Right ventricle myocardium inferior (tissue), 1 donor: ENCODE measurements at regions of chr4 and their contacts with region 1.

Region 1: DNA sequence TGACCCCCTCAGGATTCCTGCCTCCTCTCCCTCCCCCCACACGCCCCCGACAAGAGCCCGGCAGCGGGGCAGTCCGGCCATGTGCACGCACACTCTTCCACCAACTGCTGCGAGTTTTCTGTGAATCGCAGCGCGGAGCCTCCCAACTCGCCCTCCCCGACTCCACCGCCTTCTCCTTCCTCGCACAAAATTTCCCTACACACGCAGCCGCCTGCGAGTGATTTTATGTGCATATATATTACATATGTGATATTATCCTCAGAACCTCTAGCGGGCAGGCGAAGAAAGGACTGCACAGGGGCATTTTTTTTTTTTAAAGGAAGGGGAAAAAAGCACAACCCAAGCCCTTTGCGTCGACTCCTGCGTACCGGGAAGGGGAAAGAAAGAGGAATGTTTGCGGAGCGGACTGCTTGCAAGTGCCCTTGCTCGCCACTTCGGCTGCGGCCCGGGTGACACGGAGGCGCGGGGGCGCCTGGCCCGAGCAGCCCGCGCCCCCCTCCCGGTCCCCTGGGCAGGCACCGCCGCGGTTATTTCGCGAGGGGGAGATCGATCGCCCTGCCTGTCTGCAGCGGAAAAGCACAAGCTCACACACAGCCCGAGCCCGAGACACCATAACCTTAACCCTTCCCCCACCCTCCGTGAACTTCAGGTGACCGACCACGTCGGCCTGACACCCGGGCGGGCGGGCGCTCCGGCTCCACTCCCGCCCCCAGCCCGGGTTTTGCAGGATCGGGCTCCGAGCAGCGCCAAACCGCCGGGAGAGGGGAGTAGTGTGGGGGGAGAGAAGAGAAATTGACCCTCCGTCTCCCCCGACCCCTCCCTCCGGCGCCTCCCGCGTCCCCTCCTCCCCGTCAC is 2.3 kb downstream of the ZNF827 start:
- DNase-seq: peak; percentile 76
- ATAC-seq: peak; percentile 63

Region 2: GRCh38 chr4:145333807-145334206 is 602.6 kb before region 1 on chr4:
- intact Hi-C with region 1: no loop called
- DNase-seq: no peak
- ATAC-seq: no peak

Region 3: GRCh38 chr4:145694929-145695328 is 241.4 kb before region 1 on chr4:
- intact Hi-C with region 1: no loop called
- DNase-seq: no peak
- ATAC-seq: no peak

Region 4: DNA sequence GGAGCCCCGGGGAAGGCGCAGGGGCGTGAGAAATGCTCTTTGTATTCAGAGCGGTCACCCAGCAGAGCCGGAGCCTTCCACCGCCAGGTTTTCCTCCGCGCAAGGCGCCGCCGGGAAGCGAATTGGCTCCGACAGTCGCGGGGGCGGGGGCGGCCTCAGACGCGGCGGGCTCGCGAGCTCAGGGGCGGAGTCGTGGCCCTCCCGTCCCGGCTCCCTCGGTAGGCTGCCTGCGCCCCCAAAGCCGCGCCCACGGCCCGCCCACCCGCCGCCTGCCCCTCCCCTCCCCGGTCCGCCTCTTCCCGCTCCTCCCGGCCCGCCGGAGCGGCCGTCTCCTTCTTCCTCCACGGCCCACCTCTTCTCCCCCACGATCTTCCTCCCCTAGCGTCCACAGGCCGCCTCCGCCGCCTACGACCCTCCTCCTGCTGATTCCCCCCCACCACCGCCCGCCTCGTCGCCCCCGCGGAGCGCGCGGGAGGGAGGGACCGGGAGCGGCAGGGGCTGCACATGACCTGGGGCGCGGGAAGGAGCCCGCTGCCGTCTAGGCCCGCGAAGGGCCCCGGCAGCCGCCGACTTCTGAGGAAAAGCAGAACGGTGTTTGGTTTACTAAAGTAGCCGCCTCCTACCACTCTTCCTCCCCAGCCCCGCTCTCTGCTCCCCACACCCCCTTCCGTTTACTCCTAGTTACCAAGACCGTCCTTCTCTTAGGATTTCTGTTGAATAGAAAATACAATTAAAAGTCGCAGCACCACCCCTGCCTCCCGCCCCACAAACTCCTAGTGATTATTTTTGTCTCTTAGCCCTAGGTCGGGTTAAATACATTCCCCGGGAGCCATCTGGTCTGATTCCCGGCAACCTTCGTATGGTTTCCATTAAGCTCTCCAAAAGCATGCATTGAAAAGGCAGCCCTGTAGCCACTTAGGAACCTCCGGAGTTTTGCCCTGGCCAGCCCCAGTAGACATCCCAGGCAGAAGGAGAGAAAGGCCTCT is 203.2 kb before region 1 on chr4:
- intact Hi-C with region 1: loop called (anchors 1 kb)
- DNase-seq: peak; percentile 95
- ATAC-seq: peak; percentile 98

Region 5: GRCh38 chr4:145743641-145744040 is 192.7 kb before region 1 on chr4:
- intact Hi-C with region 1: no loop called
- DNase-seq: no peak
- ATAC-seq: no peak

Region 6: GRCh38 chr4:145887241-145887991 is 49.0 kb before region 1 on chr4:
- intact Hi-C with region 1: loop called (anchors 2 kb)
- DNase-seq: no peak
- ATAC-seq: peak; percentile 70

Region 7: GRCh38 chr4:145909281-145909715 is 27.1 kb before region 1 on chr4:
- intact Hi-C with region 1: loop called (anchors 1 kb)
- DNase-seq: peak; percentile 75
- ATAC-seq: peak; percentile 94

Region 8: GRCh38 chr4:146175541-146176453 is 239.4 kb after region 1 on chr4 and contains the start of gene LSM6:
- intact Hi-C with region 1: loop called (anchors 10 kb)
- DNase-seq: peak; percentile 93
- ATAC-seq: peak; percentile 98
- total RNA-seq, gene LSM6: 14.8 TPM